HCT116 (cell line): ENCODE measurements at regions of chr9 and their contacts with region 1.

Region 1: GRCh38 chr9:130866474-130866965 is 30.1 kb downstream of the QRFP start:
- DNase-seq: peak; percentile 92
- ATAC-seq: peak; percentile 96
- H3K4me3 ChIP-seq: no peak overlapping the region
- H3K27ac ChIP-seq: no peak overlapping the region
- H3K4me1 ChIP-seq: no peaks in the 10 kb centered on the region
- H3K27me3 ChIP-seq: no peaks in the 10 kb centered on the region
- CTCF ChIP-seq: peak; percentile 98 to 99 (median 99)
- POLR2A ChIP-seq: no peak
- RAD21 ChIP-seq: peak; percentile 87

Region 2: DNA sequence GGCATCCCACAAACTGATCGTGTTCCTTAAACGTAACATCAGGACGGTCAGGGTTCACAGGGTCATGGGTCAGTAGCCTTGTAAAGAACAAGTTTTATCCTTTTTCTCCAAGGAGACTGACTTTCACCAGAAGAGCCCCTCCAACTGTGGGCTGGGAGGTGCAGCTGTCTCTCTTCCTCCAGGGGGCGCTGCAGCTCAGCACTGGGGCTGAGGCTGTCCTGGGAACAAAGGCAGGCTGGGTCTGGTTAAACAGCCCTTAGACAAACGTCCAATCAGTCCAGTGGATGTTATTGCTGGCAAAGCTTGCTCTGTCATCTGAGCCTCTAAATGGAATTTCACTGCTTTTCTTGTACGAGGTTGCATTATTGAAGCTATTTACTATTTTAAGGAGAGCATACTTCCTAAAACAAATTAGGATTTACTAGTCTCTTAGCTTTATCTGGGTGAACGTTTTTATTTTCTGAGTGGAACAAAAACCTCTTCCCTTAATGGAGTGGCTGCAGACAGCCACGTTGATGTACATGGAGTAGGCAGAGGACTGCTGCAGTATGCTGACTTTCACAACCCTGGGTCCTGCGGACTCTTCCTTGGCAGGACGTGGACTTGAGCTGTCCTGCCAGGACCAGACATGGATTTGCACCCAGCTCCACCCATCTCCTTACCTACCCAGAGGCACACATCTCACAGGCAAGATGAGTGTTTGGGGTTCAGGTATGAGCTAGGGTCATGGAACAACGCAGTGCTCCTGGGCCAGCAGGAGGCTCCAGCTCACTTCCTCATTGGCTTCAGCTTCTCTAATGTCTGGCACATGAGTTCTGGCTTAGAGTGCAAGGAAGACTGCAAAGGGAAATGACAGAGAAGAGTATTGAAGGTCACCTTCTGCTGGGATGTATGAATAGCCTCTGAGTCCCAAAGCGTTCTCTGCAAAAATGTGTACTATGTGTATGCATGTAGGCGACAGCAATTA is 165.2 kb before region 1 on chr9:
- CTCF ChIA-PET with region 1: interaction called, 37 read pairs
- POLR2A ChIA-PET with region 1: no interaction called
- RAD21 ChIA-PET with region 1: interaction called in 1 of 2 experiments, 3 read pairs
- intact Hi-C with region 1: loop called (anchors 1 kb)
- DNase-seq: no peak
- ATAC-seq: peak; percentile 93
- H3K4me3 ChIP-seq: no peak overlapping the region
- H3K27ac ChIP-seq: no peak overlapping the region
- H3K4me1 ChIP-seq: peaks cover 3 to 7% of the 10 kb centered on the region in 2 experiments; a peak in 3 of 4 replicates
- H3K27me3 ChIP-seq: no peaks in the 10 kb centered on the region
- CTCF ChIP-seq: peak; percentile 65 to 99 (median 99); a peak in 5 of 6 replicates
- POLR2A ChIP-seq: no peak
- RAD21 ChIP-seq: peak; percentile 71

Region 3: DNA sequence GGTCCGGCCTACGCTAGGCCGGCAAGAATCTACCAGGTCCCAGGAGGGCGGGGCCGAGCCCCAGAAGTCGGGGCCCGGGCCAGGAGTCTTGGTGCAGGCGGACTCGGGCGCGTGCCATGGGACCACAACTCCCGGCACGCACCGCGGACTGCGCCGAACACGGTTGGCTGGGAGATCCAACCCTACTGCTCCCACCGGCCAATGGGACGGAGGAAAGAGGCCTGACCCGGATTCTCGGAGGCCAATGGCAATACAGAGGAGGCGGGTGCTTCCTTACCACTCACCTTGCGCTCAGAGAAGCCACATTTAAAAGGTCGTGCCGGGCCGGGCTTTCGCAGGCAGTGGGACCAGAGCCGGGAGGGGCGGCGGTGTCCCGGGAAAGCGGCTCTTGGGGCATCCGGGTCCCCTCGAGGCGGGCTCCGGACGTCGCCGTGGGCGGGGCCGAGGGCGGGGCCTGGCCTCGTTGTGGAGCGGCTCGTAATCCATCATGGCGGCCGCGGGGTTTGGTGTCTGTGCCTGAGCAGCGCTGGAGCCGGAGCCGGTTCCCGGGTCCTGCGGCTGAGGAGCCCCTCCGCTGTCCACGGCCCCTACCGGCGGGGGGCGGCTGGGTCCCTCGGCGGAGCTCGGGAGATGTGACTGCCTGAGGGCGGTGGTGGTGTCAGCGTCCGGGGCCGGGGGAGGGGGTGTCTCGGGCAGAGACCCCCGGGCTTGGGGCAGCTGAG is 153.8 kb before region 1 on chr9:
- CTCF ChIA-PET with region 1: interaction called, 37 read pairs
- POLR2A ChIA-PET with region 1: no interaction called
- RAD21 ChIA-PET with region 1: no interaction called
- intact Hi-C with region 1: loop called (anchors 1 kb)
- DNase-seq: peak; percentile 96
- ATAC-seq: peak; percentile 97
- H3K4me3 ChIP-seq: peak overlapping the region; percentile 87 to 93
- H3K27ac ChIP-seq: peak overlapping the region; percentile 74
- H3K4me1 ChIP-seq: peaks cover 0 to 31% of the 10 kb centered on the region in 2 experiments; a peak in 3 of 4 replicates
- H3K27me3 ChIP-seq: no peaks in the 10 kb centered on the region
- CTCF ChIP-seq: no peak
- POLR2A ChIP-seq: no peak
- RAD21 ChIP-seq: no peak

Region 4: DNA sequence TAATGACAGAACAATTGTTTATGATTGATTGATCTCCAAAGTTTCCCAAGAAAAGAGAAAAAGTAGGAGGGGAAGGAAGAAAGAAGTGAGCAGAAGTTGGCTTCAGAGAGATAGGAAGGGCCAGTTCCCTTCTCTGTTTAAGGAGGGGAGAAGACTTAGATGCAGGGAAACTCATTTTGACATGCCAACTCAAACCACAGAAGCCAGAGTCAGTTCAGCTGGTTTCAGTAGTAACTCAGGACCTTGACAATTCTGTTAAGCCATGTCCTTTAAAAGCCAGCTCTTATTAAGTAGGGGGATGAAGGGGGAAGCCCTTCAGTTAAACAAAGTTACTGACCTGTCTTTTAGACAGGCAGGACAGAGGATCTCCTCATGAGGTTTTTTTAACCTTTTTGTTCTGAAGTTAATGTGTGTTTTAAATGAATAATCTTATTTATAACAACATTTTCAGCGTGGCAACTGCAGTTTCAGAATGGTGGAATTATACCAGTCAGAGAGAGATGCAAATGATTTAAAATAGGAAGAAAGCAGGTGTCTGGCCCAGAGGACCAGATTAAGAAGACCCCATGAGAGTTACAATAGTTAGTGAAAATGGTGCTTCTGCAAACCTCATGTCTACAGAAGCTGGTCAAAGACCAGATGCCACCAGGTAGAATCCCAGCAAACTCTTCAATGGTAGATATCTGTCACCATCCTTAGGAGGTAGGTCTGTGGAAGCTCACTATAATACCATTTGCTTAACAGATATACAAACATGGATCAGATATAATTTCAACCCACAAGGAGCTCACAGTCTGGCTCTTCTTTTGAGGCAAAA is 60.8 kb before region 1 on chr9:
- CTCF ChIA-PET with region 1: no interaction called
- POLR2A ChIA-PET with region 1: no interaction called
- RAD21 ChIA-PET with region 1: no interaction called
- intact Hi-C with region 1: no loop called
- DNase-seq: no peak
- ATAC-seq: no peak
- H3K4me3 ChIP-seq: no peak overlapping the region
- H3K27ac ChIP-seq: no peak overlapping the region
- H3K4me1 ChIP-seq: no peaks in the 10 kb centered on the region
- H3K27me3 ChIP-seq: no peaks in the 10 kb centered on the region
- CTCF ChIP-seq: no peak
- POLR2A ChIP-seq: no peak
- RAD21 ChIP-seq: no peak

Region 5: GRCh38 chr9:130852801-130853200 is 13.7 kb before region 1 on chr9:
- CTCF ChIA-PET with region 1: interaction called, 11 read pairs
- POLR2A ChIA-PET with region 1: no interaction called
- RAD21 ChIA-PET with region 1: interaction called in 1 of 2 experiments, 11 read pairs
- intact Hi-C with region 1: no loop called
- DNase-seq: no peak
- ATAC-seq: no peak
- H3K4me3 ChIP-seq: no peak overlapping the region
- H3K27ac ChIP-seq: no peak overlapping the region
- H3K4me1 ChIP-seq: peaks cover 3 to 8% of the 10 kb centered on the region in 2 experiments
- H3K27me3 ChIP-seq: no peaks in the 10 kb centered on the region
- CTCF ChIP-seq: no peak
- POLR2A ChIP-seq: no peak
- RAD21 ChIP-seq: no peak

Region 6: DNA sequence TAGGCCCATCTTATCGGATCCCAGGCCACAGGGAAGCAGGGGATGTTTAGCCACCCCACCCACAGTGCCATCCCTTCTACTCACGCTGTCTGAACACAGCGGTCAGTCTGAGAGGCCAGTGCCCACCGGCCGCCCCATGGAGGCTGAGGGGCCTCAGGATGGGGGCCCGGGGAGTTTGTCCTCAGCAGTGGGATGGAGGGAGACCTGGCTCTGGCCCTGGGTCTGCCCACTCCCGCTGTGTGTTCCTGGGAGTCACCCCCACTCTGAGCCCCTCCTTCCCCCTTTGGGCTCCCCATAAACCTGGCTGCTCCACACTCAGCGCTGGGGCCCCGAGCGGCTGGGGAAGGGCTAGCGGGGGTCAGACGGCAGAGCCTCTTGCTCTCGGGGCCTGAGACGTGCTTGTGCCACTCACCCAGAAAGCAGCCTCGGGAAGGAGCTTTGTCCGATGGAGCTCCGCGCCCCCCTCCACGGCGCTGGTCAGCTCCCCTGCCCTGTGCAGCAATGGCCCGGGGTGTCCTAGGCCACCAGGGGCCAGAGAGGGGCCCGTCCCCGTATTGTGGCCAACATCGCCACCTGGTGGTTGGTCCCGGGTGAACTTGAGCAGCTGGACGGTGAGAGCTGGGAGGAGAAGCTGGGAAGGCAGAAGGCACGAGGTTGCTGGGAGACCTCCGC is 131.5 kb after region 1 on chr9:
- CTCF ChIA-PET with region 1: interaction called, 88 read pairs
- POLR2A ChIA-PET with region 1: interaction called, 4 read pairs
- RAD21 ChIA-PET with region 1: interaction called, 12 to 18 read pairs
- intact Hi-C with region 1: loop called (anchors 1 kb)
- DNase-seq: peak; percentile 60
- ATAC-seq: peak; percentile 93
- H3K4me3 ChIP-seq: no peak overlapping the region
- H3K27ac ChIP-seq: no peak overlapping the region
- H3K4me1 ChIP-seq: peaks cover 5 to 17% of the 10 kb centered on the region in 2 experiments; a peak in 3 of 4 replicates
- H3K27me3 ChIP-seq: no peaks in the 10 kb centered on the region; the same call in 1 of the 2 replicates
- CTCF ChIP-seq: peak; percentile 72 to 96 (median 90)
- POLR2A ChIP-seq: no peak
- RAD21 ChIP-seq: peak; percentile 98